ENCODE measurements at regions of chr2 and their contacts with region 1.

Region 1: DNA sequence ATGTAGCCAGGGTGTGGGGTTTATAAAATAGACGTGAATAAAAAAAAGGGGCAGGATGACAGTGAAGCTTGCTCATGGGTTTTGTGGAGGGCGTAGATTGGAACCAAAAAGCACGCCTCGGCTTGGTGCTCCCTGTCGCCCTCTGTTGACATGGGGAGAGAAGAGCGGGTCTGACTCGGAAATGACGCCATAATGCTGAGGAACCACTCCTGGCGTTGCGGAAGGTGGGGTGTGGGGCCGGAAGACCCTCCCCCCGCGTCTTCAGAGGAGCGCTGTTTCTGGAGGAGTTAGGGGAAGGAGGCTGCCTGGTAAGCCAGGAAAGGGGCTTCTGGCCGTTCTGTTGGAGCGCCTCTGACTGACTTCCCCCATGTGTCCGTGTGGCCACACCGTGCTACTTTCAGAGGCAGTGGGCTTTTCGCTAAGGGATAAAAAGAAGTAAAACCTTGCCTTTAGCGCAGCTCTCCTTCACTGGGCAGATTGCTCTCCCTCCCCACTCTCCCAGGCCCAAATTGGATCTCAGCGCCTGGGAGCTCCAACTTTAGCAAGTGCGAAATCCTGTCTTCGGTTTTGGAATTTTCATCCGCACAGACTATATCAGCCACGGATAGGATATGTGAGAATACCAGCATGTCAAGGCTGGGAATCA is 42.8 kb downstream of the PLEKHA3 start:
- DNase-seq: peak; percentile 85
- H3K4me3 ChIP-seq: peak overlapping the region; percentile 80 to 95
- H3K27ac ChIP-seq: peak overlapping the region; percentile 71 to 80
- H3K4me1 ChIP-seq: peaks cover 0 to 3% of the 10 kb centered on the region in 2 experiments; a peak in 2 of 4 replicates
- H3K27me3 ChIP-seq: no peaks in the 10 kb centered on the region
- CTCF ChIP-seq: peak; percentile 92
- EP300 ChIP-seq: no peak
- RAD21 ChIP-seq: peak; percentile 58

Region 2: DNA sequence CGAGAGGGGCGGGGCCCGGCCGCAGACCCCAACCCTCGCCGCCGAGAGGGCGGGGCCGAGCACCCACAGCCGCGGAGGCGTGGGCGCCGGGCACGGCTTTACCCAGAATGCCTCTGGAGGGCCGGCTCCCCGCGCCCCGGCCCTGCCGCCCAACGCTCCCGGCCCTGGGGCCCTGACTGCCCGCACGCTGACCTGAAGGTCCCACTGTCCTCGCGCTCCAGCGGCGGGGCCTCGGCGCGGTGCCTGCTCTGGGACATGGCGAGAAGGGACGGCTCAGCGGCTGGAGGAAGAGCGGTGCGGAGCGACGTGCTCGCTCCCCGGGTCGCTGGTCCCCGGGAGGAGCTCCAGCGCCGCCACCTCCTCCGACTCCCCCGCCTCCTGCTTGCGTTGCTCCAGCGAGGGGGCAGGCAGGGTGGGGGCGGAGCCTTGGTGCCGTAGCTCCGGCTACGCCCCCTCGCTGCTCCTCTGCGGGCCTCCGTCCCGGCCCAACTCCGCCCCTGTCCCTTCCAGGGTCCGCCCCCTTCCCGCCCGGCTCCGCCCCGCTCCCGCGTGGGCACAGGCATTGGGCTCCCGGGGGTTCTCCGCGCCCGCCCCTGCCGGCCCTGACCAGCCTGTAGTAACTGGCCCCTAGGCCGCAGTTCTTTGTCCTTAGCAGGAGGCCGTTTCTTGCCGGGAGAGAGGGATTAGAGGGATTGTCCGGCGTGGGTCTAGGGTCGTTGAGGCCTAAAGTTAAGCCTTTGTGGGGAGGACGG is 72.1 kb before region 1 on chr2 and contains the starts of genes PJVK and PRKRA:
- CTCF ChIA-PET with region 1: no interaction called
- POLR2A ChIA-PET with region 1: interaction called, 12 read pairs
- DNase-seq: peak; percentile 98
- H3K4me3 ChIP-seq: peak within 1 kb of the TSS; percentile 97 to 100
- H3K27ac ChIP-seq: peak within 1 kb of the TSS; percentile 91 to 98
- H3K4me1 ChIP-seq: peaks cover 0 to 22% of the 10 kb centered on the region in 2 experiments; a peak in 2 of 4 replicates
- H3K27me3 ChIP-seq: no peaks in the 10 kb centered on the region
- CTCF ChIP-seq: no peak
- EP300 ChIP-seq: 0 out of 4 replicates have a peak, but pooled peaks of 1 of the 2 experiments have one; percentile 22
- RAD21 ChIP-seq: no peak
- polyA plus RNA-seq, gene PJVK: 5.3 and 10.8 TPM in 2 replicates
- polyA plus RNA-seq, gene PRKRA: 35.7 and 44.3 TPM in 2 replicates

Region 3: GRCh38 chr2:178499640-178500039 is 23.4 kb before region 1 on chr2:
- CTCF ChIA-PET with region 1: interaction called, 10 read pairs
- POLR2A ChIA-PET with region 1: no interaction called
- DNase-seq: no peak
- H3K4me3 ChIP-seq: no peak overlapping the region
- H3K27ac ChIP-seq: no peak overlapping the region
- H3K4me1 ChIP-seq: no peaks in the 10 kb centered on the region; a peak in 1 of 4 replicates
- H3K27me3 ChIP-seq: no peaks in the 10 kb centered on the region
- CTCF ChIP-seq: no peak
- EP300 ChIP-seq: no peak
- RAD21 ChIP-seq: no peak

Region 4: DNA sequence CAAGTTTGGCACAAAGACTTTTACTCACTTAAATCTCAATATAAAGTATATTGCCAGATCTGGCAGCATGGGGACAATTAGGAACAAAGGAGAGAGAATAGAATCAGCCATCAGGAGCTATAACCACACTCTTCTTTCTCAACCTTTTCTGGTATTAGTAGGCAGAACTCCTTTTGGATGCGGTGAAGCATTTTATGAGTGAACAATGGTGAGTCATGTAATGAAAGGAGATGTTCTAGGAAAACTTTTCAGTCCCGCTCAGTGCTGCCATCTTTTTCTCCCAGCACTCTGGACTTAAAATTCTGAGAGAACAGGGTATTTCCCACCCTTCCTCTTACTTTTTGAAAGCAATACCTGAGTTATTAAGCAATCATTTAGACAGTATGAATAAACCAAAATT is 10.6 kb before region 1 on chr2:
- CTCF ChIA-PET with region 1: interaction called, 12 read pairs
- POLR2A ChIA-PET with region 1: no interaction called
- DNase-seq: no peak
- H3K4me3 ChIP-seq: no peak overlapping the region
- H3K27ac ChIP-seq: no peak overlapping the region
- H3K4me1 ChIP-seq: no peaks in the 10 kb centered on the region; a peak in 1 of 4 replicates
- H3K27me3 ChIP-seq: no peaks in the 10 kb centered on the region
- CTCF ChIP-seq: no peak
- EP300 ChIP-seq: no peak
- RAD21 ChIP-seq: no peak

Region 5: GRCh38 chr2:178542569-178542968 is 19.5 kb after region 1 on chr2:
- CTCF ChIA-PET with region 1: interaction called, 13 read pairs
- POLR2A ChIA-PET with region 1: interaction called, 7 read pairs
- DNase-seq: no peak
- H3K4me3 ChIP-seq: no peak overlapping the region
- H3K27ac ChIP-seq: no peak overlapping the region
- H3K4me1 ChIP-seq: no peaks in the 10 kb centered on the region
- H3K27me3 ChIP-seq: no peaks in the 10 kb centered on the region
- CTCF ChIP-seq: no peak
- EP300 ChIP-seq: no peak
- RAD21 ChIP-seq: no peak

Measured in SK-N-SH (cell line).